Gastrocnemius medialis (tissue), 4 donors: ENCODE measurements at regions of chr10 and their contacts with region 1.

Region 1: DNA sequence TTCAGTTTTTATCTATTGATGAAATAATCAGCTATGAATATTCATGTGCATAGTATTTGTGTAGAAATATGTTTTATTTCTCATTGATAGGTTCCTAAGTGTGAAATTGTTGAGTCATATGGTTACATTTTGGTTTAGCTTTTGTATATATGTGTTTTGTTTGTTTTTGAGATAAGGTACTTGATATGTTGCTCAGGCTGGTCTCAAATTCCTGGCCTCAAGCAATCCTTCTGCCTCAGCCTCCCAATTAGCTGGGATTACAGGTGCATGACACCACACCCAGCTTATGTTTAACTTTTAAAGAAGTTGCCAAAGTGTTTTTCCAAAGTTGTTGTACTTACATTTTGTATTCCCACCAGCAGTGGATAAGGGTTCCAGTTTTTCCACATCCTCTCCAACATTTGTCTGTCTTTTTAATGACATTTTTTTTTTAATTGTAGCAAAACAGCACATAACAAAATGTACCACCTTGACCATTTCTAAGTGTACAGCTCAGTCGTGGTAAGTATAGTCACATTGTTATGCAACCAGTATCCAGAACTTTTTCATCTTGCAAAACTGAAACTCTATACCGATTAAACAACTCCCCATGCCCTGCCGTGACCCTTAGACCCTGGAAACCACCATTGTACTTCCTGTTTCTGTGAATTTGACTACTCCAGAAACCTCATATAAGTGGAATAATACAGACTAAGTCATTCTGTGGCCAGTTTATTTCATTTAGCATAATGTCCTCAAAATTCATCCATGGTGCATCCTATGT is 12.6 kb upstream of the UBE2D1 start:
- DNase-seq: peak; percentile 11 to 48
- ATAC-seq: peak; percentile 80 to 94
- H3K4me3 ChIP-seq: no peak overlapping the region
- H3K27ac ChIP-seq: peak overlapping the region in 3 of 4 donors; percentile 57 to 61 (median 58)
- H3K4me1 ChIP-seq: no peaks in the 10 kb centered on the region
- H3K27me3 ChIP-seq: peaks cover 0 to 2% (median 0%) of the 10 kb centered on the region in 3 donors
- CTCF ChIP-seq: no peak
- POLR2A ChIP-seq: no peak

Region 2: DNA sequence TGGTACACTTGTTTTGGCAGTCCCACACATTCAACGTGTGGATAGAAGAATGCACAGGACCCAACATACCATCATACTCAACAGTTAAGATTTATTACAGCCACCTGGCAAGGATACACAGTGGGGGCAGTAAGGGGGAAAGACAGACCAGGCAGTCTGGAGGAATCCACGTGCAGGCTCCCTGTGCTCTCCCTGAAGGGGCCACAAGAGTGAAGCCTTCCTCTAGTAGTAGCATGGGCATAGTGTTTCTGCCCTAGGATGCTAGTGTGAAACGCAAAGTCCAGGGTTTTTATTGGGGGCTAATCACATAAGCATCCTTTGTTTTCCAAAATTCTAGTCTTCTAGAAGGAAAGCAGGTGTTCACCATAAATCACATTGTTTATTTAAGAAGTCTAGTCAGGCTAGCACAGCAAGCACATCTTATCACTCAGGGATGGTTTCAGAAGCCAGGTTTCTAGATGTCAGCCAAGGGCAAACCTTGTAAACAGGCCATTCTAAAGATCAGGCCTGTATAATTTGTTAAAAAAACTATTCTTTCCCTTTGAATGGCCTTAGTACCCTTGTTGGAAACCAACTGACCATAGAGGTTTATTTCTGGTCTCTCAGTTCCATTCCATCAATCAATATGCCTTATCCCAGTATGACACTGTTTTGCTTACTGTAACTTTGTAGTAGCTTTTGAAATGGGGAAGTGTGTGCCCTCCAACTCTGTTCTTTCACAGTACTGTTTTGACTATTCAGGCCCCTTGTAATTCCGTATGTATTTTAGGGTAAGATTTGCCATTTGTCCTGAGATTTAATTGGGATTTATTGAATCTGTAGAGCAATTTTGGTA is 50.6 kb after region 1 on chr10:
- in situ Hi-C with region 1: loop called in 1 of 4 experiments (anchors 10 kb)
- intact Hi-C with region 1: no loop called
- DNase-seq: no peak
- ATAC-seq: peak; percentile 56 to 78
- H3K4me3 ChIP-seq: no peak overlapping the region
- H3K27ac ChIP-seq: peak overlapping the region; percentile 68 to 81 (median 70)
- H3K4me1 ChIP-seq: peaks cover 12 to 33% of the 10 kb centered on the region in 2 donors
- H3K27me3 ChIP-seq: no peaks in the 10 kb centered on the region
- CTCF ChIP-seq: no peak
- POLR2A ChIP-seq: no peak